ENCODE measurements at regions of chr10 and their contacts with region 1.

Region 1: DNA sequence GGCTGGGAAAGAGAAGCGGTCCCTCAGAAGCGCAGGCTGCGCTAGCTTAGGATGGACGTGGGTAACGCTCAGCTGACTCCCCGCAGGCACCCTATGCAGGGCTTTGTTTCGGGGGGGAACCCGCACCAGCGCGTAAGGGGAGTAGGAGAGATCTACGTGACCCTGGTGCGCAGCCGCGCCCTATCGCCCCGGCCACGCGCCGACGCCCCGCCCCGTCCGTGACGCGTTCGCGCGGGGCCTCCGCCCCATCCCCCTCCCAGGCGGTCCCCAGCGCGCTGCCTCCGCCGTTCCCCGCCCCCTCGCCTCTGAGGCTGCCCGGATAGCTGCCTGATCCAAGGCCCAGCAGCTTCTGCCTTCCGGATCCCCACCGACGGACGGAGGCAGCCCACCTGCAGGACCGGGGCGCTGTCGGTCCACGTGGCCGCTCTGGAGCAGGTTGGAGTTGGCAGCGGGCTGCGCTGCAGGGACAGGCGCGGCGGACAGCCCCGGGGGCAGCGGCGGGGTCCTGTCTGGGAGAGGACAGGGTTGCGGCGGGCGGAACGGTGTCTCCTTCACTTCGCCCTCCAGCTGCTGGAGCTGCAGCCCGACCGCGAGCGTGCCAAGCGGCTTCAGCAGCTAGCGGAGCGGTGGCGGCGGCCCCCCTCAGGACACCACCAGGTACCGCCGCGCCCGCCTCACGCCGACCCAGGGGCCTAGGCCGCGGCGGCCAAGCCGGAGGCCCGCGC is at the start of gene VDAC2:
- DNase-seq: peak; percentile 84
- H3K4me3 Mint-ChIP-seq: peak within 1 kb of the TSS; percentile 79
- H3K27ac Mint-ChIP-seq: peak within 1 kb of the TSS; percentile 92
- H3K4me1 Mint-ChIP-seq: peaks cover 21% of the 10 kb centered on the region
- H3K27me3 Mint-ChIP-seq: no peaks in the 10 kb centered on the region
- CTCF ChIP-seq: no peak
- total RNA-seq, gene VDAC2: 303 and 310 TPM in 2 replicates

Region 2: DNA sequence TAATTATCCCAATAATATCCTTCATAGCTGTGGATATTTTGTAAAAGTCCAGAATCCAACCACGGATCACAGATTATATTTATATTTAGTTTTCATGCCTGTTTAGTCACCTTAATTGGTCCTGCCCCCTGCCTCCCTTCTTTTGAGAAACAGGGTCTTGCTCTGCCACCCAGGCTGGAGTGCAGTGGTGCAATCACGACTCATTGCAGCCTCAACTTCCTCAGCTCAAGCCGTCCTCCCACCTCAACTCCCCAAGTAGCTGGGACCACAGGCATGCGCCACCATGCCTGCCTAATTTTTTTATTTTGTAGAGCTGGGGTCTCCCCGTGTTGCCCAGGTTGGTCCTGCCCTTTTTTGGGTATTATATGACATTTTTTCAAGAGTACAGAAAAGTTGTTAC is 254.6 kb before region 1 on chr10:
- CTCF ChIA-PET with region 1: no interaction called
- POLR2A ChIA-PET with region 1: no interaction called
- intact Hi-C with region 1: no loop called
- DNase-seq: peak; percentile 30
- H3K4me3 Mint-ChIP-seq: no peak overlapping the region
- H3K27ac Mint-ChIP-seq: no peak overlapping the region
- H3K4me1 Mint-ChIP-seq: peaks cover 5% of the 10 kb centered on the region
- H3K27me3 Mint-ChIP-seq: no peaks in the 10 kb centered on the region
- CTCF ChIP-seq: no peak

Region 3: GRCh38 chr10:75111367-75111906 is 99.0 kb before region 1 on chr10 and contains the start of gene SAMD8:
- CTCF ChIA-PET with region 1: interaction called, 6 read pairs
- POLR2A ChIA-PET with region 1: interaction called, 41 read pairs
- intact Hi-C with region 1: no loop called
- DNase-seq: peak; percentile 95
- H3K4me3 Mint-ChIP-seq: peak within 1 kb of the TSS; percentile 95
- H3K27ac Mint-ChIP-seq: peak within 1 kb of the TSS; percentile 95
- H3K4me1 Mint-ChIP-seq: peaks cover 23% of the 10 kb centered on the region
- H3K27me3 Mint-ChIP-seq: no peaks in the 10 kb centered on the region
- CTCF ChIP-seq: no peak
- total RNA-seq, gene SAMD8: 28.1 and 33.9 TPM in 2 replicates

Region 4: DNA sequence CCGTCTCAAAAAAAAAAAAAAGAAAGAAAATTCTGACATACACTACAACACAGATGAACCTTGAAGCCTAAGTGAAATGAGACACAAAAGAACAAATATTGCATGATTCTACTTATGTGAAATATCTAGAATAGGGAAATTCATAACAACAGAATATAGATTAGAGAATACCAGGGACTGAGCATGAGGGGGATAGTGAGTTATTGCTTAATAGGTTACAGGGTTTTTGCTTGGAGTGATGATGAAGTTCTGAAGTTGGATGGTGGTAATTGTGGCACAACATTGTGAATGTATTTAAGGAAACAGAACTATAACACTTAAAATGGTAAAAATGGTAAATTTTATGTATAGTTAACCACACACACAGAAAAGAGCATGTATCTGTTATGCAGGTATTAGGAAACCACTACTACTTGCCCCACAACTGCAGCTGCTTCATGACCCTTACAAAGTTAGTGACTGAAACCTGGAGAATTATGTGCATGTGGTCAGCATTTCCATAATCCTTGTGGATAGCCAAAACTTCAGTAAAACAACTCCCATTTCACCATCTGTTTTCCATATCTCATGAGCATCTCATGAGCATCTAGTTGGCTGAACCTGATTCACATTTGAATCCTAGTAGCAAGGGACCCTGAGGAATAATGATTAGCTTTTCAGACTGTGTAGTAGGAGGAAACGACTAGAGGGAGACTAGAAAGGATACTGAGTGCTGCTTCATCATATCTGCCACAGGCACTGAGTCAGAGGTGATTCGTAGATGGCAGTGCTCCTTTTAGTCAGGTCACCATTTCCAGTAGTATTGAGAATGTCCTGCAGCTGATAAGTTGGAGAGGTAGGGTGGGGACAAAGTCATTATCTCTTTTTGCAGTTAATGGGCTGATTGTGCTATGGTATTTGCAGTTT is 72.7 kb before region 1 on chr10:
- CTCF ChIA-PET with region 1: no interaction called
- POLR2A ChIA-PET with region 1: interaction called, 16 read pairs
- intact Hi-C with region 1: no loop called
- DNase-seq: no peak
- H3K4me3 Mint-ChIP-seq: no peak overlapping the region
- H3K27ac Mint-ChIP-seq: peak overlapping the region; percentile 16
- H3K4me1 Mint-ChIP-seq: peaks cover 18% of the 10 kb centered on the region
- H3K27me3 Mint-ChIP-seq: no peaks in the 10 kb centered on the region
- CTCF ChIP-seq: no peak

Region 5: GRCh38 chr10:75143353-75143752 is 67.1 kb before region 1 on chr10:
- CTCF ChIA-PET with region 1: no interaction called
- POLR2A ChIA-PET with region 1: interaction called, 16 read pairs
- intact Hi-C with region 1: no loop called
- DNase-seq: peak; percentile 28
- H3K4me3 Mint-ChIP-seq: peak overlapping the region; percentile 71
- H3K27ac Mint-ChIP-seq: peak overlapping the region; percentile 93
- H3K4me1 Mint-ChIP-seq: peaks cover 36% of the 10 kb centered on the region
- H3K27me3 Mint-ChIP-seq: no peaks in the 10 kb centered on the region
- CTCF ChIP-seq: no peak

Region 6: DNA sequence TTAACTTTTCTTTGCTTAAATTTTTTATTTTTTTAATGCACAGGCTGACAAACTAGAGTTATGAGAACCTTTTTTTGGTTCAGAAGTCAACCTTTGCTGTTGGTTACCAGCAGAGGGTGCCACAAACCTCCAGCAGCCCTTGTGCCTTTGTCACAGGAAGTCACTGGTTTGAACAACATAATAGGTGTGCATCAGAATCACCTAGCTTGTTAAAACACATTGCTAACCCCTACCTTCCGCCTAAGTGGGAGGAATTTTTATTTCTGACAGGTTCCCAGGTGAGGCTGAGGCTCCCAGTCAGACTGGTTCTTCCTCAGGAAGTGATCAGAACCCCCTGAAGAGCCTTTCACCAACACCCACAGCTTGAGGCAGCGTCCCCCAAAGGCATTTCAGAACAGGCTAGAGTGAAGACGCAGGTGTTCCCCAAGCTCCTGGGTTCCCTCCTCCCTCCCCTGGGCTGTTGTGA is 22.4 kb before region 1 on chr10:
- CTCF ChIA-PET with region 1: interaction called, 34 read pairs
- POLR2A ChIA-PET with region 1: interaction called, 315 read pairs
- intact Hi-C with region 1: loop called (anchors 1 kb)
- DNase-seq: peak; percentile 78
- H3K4me3 Mint-ChIP-seq: no peak overlapping the region
- H3K27ac Mint-ChIP-seq: no peak overlapping the region
- H3K4me1 Mint-ChIP-seq: peaks cover 22% of the 10 kb centered on the region
- H3K27me3 Mint-ChIP-seq: no peaks in the 10 kb centered on the region
- CTCF ChIP-seq: peak; percentile 83

Region 7: GRCh38 chr10:75195035-75195763 is 15.2 kb before region 1 on chr10:
- CTCF ChIA-PET with region 1: interaction called, 12 read pairs
- POLR2A ChIA-PET with region 1: interaction called, 315 read pairs
- intact Hi-C with region 1: no loop called
- DNase-seq: no peak
- H3K4me3 Mint-ChIP-seq: no peak overlapping the region
- H3K27ac Mint-ChIP-seq: peak overlapping the region; percentile 66
- H3K4me1 Mint-ChIP-seq: peaks cover 40% of the 10 kb centered on the region
- H3K27me3 Mint-ChIP-seq: no peaks in the 10 kb centered on the region
- CTCF ChIP-seq: no peak

Measured in MCF 10A (cell line).